ENCODE measurements at regions of chr22 and their contacts with region 1.

Region 1: DNA sequence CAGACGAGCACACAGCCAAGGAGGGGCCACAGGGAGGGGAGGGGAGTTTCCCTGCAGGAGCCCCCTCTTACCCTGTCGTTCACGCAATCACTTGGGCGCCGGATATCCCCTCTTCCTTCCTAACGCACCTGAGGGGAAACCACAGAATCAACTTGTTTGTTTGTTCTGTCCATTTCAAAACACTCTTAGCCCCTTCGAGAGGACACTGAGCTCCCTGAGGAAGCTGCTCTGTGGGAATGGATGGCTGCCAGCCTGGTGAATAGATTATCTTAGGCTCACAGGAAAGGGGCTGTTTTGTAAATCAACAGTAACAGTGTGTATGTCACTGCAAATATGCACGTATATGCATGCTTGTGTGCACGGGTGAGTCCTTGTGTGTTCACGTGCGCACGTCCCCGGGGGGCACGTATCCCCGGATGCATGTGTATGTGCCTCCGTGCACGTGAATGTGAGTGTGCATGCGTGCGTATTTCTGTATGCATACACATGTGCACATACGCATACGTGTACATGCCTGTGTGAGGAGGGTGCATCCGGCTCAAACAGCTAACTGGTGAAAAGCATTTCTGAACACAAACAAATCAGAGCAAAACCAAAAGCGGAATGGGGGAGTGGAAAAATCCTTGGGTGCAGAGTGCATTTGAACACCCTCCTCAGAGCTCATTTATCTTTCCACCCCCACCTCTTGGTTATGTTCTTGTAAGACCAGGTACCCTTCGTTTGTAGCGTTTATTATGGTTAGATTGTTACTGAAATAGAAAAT is 7.2 kb downstream of the ARSA start:
- DNase-seq: peak; percentile 82
- H3K4me3 Mint-ChIP-seq: peak overlapping the region; percentile 82
- H3K27ac Mint-ChIP-seq: peak overlapping the region; percentile 99
- H3K4me1 Mint-ChIP-seq: peaks cover 38% of the 10 kb centered on the region
- H3K27me3 Mint-ChIP-seq: no peaks in the 10 kb centered on the region

Region 2: GRCh38 chr22:50190182-50190940 is 430.4 kb before region 1 on chr22:
- CTCF ChIA-PET with region 1: no interaction called
- POLR2A ChIA-PET with region 1: interaction called, 15 read pairs
- DNase-seq: peak; percentile 87
- H3K4me3 Mint-ChIP-seq: peak overlapping the region; percentile 79
- H3K27ac Mint-ChIP-seq: peak overlapping the region; percentile 95
- H3K4me1 Mint-ChIP-seq: peaks cover 57% of the 10 kb centered on the region
- H3K27me3 Mint-ChIP-seq: no peaks in the 10 kb centered on the region

Region 3: DNA sequence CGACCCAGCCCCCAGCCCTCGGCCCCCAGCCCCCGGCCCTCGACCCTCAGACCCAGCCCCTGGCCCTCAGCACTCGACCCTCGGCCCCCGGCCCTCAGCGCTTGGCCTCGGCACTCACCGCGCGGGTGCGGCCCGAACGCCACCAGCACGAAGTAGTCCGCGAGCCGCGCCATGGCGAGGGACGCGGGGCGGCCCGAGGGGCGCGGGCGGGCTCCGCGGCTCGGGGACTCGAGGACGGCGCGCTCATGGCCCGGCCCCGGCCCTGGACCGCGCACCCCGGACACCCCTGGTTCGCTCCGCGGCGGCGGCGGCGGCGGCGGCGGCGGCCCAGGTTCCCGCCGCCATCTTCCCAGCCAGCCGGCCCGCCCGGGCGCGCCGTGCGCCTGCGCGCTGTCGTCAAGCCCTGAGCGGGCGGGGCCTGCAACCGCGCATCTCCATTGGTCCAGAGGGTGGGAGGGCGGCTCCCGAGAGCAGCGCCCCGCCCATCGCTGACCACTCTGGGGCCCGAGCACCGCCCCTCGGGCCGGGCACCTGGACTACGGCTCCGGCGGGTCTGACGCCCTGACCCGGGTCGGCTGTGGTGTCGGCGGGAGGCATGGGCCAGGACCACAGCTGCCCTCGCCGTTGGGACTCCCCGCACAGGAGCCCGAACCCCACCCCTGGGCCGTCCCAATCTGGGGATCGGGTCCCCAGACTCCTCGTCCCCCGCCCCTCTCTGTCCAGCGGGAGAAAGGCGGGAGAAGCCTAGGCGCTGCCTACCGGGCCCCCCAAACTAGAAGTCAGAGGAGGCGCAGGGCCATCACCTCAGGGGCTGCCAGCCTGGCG is 145.9 kb before region 1 on chr22 and contains the start of gene SBF1:
- CTCF ChIA-PET with region 1: interaction called, 11 read pairs
- POLR2A ChIA-PET with region 1: interaction called, 18 read pairs
- DNase-seq: peak; percentile 91
- H3K4me3 Mint-ChIP-seq: peak within 1 kb of the TSS; percentile 92
- H3K27ac Mint-ChIP-seq: peak within 1 kb of the TSS; percentile 97
- H3K4me1 Mint-ChIP-seq: peaks cover 52% of the 10 kb centered on the region
- H3K27me3 Mint-ChIP-seq: peaks cover 3% of the 10 kb centered on the region
- total RNA-seq, gene SBF1: 181 to 196 TPM

Region 4: GRCh38 chr22:50525390-50526068 is 95.2 kb before region 1 on chr22 and contains the start of gene SCO2:
- CTCF ChIA-PET with region 1: interaction called, 76 read pairs
- POLR2A ChIA-PET with region 1: interaction called, 117 read pairs
- DNase-seq: peak; percentile 98
- H3K4me3 Mint-ChIP-seq: peak within 1 kb of the TSS; percentile 86
- H3K27ac Mint-ChIP-seq: peak within 1 kb of the TSS; percentile 89
- H3K4me1 Mint-ChIP-seq: peaks cover 43% of the 10 kb centered on the region
- H3K27me3 Mint-ChIP-seq: no peaks in the 10 kb centered on the region
- total RNA-seq, gene SCO2: 6.4 to 7.0 TPM

Region 5: DNA sequence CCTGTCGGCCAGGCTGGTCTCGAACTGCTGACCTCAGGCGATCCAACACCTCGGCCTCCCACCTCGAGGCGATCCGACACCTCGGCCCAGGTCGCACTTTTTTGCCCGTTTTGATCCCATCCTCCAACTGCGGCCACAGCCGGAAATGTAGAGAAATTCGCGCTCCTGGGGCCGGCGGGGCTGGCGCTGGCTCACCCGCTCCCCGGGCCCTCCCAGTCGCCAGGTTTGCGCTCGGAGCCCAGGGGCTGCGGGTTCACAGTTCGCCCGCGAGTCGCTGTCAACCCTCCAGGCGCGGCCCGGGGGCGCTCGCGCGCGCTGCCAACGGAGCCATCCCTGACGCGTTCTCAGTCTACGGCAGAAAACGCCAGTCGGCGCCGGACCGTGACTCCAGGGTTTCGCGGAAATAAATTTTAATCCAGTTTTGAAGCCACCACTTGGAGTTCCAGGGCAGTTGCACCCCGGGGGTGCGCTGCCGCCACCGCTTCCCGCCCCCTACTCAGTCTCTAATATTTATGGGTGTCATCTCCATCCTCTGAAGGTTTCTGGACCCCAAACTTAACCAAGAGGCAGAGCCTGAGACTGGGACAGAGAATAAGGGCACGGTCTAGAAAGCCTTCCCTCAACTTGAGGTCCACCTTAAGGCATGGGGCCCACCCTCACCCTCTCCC is 76.6 kb before region 1 on chr22:
- CTCF ChIA-PET with region 1: interaction called, 44 read pairs
- POLR2A ChIA-PET with region 1: interaction called, 69 read pairs
- DNase-seq: peak; percentile 90
- H3K4me3 Mint-ChIP-seq: peak overlapping the region; percentile 63
- H3K27ac Mint-ChIP-seq: peak overlapping the region; percentile 75
- H3K4me1 Mint-ChIP-seq: peaks cover 63% of the 10 kb centered on the region
- H3K27me3 Mint-ChIP-seq: no peaks in the 10 kb centered on the region

Region 6: GRCh38 chr22:50595189-50595588 is 25.6 kb before region 1 on chr22:
- CTCF ChIA-PET with region 1: no interaction called
- POLR2A ChIA-PET with region 1: no interaction called
- DNase-seq: no peak
- H3K4me3 Mint-ChIP-seq: no peak overlapping the region
- H3K27ac Mint-ChIP-seq: no peak overlapping the region
- H3K4me1 Mint-ChIP-seq: peaks cover 5% of the 10 kb centered on the region
- H3K27me3 Mint-ChIP-seq: peaks cover 14% of the 10 kb centered on the region

Region 7: GRCh38 chr22:50653256-50653655 is 32.5 kb after region 1 on chr22:
- CTCF ChIA-PET with region 1: no interaction called
- POLR2A ChIA-PET with region 1: no interaction called
- DNase-seq: no peak
- H3K4me3 Mint-ChIP-seq: no peak overlapping the region
- H3K27ac Mint-ChIP-seq: no peak overlapping the region
- H3K4me1 Mint-ChIP-seq: no peaks in the 10 kb centered on the region
- H3K27me3 Mint-ChIP-seq: peaks cover 15% of the 10 kb centered on the region

Region 8: DNA sequence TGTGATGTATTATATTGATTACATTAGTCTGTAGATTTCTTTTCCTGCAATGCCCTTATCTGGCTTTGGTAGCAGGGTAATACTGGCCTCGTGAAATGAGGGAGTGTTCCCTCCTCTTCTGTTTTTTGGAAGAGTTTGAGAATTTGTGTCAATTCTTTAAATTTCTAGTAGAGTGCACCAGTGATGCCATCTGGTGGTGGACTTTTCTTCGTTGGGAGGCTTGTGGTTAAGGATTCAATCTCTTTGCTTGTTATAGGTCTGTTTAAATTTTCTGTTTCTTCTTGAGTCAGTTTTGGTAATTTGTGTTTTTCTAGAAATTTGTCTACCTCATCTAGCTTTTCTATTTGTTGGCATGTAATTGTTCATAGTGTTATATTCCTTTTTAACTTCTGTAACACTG is 70.7 kb after region 1 on chr22:
- CTCF ChIA-PET with region 1: interaction called, 10 read pairs
- POLR2A ChIA-PET with region 1: no interaction called
- DNase-seq: peak; percentile 58
- H3K4me3 Mint-ChIP-seq: no peak overlapping the region
- H3K27ac Mint-ChIP-seq: no peak overlapping the region
- H3K4me1 Mint-ChIP-seq: peaks cover 16% of the 10 kb centered on the region
- H3K27me3 Mint-ChIP-seq: peaks cover 16% of the 10 kb centered on the region

Region 9: GRCh38 chr22:50731811-50732624 is 111.2 kb after region 1 on chr22:
- CTCF ChIA-PET with region 1: no interaction called
- POLR2A ChIA-PET with region 1: no interaction called
- DNase-seq: peak; percentile 60
- H3K4me3 Mint-ChIP-seq: no peak overlapping the region
- H3K27ac Mint-ChIP-seq: no peak overlapping the region
- H3K4me1 Mint-ChIP-seq: peaks cover 2% of the 10 kb centered on the region
- H3K27me3 Mint-ChIP-seq: peaks cover 5% of the 10 kb centered on the region

Measured in activated CD4-positive, alpha-beta memory T cell treated with anti-CD3 and anti-CD28 coated beads, Interleukin-2, amount 10 ng/mL, durations not matched to agents 7 days and 5 days (primary cell).